AG04450 (cell line): ENCODE measurements at regions of chr21 and their contacts with region 1.

Region 1: GRCh38 chr21:43986544-43987451 is 25.3 kb upstream of the TRAPPC10 start:
- DNase-seq: no peak
- H3K4me3 ChIP-seq: no peak overlapping the region
- H3K27ac ChIP-seq: no peak overlapping the region
- H3K27me3 ChIP-seq: peaks cover 3% of the 10 kb centered on the region
- CTCF ChIP-seq: no peak

Region 2: GRCh38 chr21:43956670-43957035 is 30.1 kb before region 1 on chr21:
- CTCF ChIA-PET with region 1: no interaction called
- POLR2A ChIA-PET with region 1: no interaction called
- DNase-seq: no peak
- H3K4me3 ChIP-seq: no peak overlapping the region
- H3K27ac ChIP-seq: no peak overlapping the region
- H3K27me3 ChIP-seq: no peaks in the 10 kb centered on the region
- CTCF ChIP-seq: no peak

Region 3: DNA sequence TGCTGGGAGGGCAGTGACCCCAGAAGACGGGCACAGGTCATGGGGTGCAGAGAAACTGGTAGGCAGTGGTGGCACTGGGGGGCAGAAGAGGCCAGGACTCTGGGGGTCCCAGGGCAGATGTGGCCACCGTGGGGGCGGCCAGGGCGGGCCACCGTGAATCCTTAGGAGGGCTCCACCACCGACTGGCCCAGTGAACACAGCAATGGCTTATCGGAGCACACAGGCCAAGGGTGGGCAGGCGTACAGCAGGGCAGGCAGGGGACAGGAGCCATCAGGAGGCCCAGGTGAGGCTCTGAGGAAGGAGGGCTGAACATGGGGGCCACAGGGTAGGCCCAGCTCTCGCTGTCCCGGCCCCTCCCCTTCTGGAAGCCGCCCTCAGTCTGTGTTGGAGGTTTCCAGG is 348.5 kb after region 1 on chr21:
- CTCF ChIA-PET with region 1: no interaction called
- POLR2A ChIA-PET with region 1: interaction called, 11 read pairs
- DNase-seq: no peak
- H3K4me3 ChIP-seq: no peak overlapping the region
- H3K27ac ChIP-seq: no peak overlapping the region
- H3K27me3 ChIP-seq: no peaks in the 10 kb centered on the region
- CTCF ChIP-seq: no peak

Region 4: GRCh38 chr21:44405948-44406872 is 419.4 kb after region 1 on chr21:
- CTCF ChIA-PET with region 1: no interaction called
- POLR2A ChIA-PET with region 1: no interaction called
- DNase-seq: no peak
- H3K4me3 ChIP-seq: no peak overlapping the region
- H3K27ac ChIP-seq: no peak overlapping the region
- H3K27me3 ChIP-seq: no peaks in the 10 kb centered on the region
- CTCF ChIP-seq: no peak